Astrocyte of the cerebellum (primary cell): ENCODE measurements at regions of chr3 and their contacts with region 1.

Region 1: GRCh38 chr3:149120051-149120972 is 9.1 kb upstream of the HPS3 start:
- DNase-seq: peak; percentile 65
- H3K4me3 ChIP-seq: no peak overlapping the region
- CTCF ChIP-seq: peak; percentile 32

Region 2: GRCh38 chr3:149067883-149068282 is 52.4 kb before region 1 on chr3:
- in situ Hi-C with region 1: no loop called
- DNase-seq: no peak
- H3K4me3 ChIP-seq: no peak overlapping the region
- CTCF ChIP-seq: no peak

Region 3: DNA sequence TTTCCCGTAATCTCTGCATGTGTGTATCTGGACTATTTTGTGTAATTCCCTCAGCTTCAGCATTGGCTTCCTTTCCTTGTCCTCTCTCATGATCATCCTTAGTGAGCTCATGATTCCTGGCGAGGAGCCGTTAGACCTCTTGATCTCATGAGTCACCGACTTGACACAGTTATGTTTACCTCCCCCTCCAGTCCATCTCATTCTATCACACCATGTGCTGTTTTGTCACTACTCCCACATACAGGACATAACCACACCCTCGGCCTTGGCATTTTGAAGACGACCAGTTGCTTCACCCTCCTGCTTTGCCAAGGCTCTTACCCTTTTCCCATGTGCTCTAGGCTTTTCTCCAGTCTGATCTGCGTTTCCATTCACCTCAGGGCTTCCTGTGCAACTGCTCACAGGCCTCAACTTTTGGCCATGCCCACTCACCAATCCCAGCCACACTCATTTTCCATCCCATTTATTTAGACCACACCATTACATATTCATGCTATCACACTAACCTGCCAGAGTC is 59.8 kb after region 1 on chr3:
- in situ Hi-C with region 1: no loop called
- DNase-seq: peak; percentile 97
- H3K4me3 ChIP-seq: no peak overlapping the region
- CTCF ChIP-seq: no peak

Region 4: DNA sequence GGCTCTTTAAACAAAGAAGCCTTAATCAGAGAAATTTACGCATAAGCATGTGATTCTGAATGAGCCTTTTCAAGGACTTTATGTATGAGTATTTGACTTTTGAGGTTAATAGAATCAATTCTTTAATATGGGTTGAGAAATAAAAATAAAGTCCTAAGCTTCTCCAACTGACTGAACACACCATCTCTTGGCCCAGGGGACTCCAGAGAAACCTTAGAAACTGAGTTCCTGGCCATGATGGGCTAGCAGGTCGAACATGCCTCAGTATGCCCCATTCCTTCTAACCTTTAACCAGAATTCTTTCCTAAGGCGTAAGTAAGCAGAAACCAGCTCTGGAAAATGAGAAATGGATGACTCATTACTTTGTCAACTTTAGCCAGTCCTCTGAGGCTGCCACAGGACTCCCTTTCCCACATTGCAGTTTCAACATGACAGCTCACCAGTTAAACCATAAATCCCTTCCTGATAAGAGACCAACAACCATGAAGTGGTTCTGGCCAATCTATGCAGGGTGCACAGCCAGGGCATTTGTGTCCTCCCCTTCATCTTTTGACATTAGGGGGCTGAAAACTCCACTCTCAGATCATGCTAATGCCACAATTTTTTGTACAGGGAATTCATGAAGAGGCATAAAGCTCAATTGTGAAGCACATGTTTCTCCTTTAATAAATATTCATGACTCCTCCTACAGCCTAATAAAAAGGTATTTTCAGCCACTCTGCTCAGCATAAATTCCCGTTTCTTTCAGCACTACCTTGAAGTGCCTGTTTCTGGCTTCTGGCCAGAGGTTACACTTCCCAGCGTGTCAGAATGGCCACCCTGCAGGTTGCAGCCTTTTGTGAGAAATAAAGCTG is 179.9 kb after region 1 on chr3:
- in situ Hi-C with region 1: loop called (anchors 25 kb)
- DNase-seq: peak; percentile 85
- H3K4me3 ChIP-seq: no peak overlapping the region
- CTCF ChIP-seq: no peak